CD4-positive, alpha-beta memory T cell (primary cell): ENCODE measurements at regions of chr6 and their contacts with region 1.

Region 1: DNA sequence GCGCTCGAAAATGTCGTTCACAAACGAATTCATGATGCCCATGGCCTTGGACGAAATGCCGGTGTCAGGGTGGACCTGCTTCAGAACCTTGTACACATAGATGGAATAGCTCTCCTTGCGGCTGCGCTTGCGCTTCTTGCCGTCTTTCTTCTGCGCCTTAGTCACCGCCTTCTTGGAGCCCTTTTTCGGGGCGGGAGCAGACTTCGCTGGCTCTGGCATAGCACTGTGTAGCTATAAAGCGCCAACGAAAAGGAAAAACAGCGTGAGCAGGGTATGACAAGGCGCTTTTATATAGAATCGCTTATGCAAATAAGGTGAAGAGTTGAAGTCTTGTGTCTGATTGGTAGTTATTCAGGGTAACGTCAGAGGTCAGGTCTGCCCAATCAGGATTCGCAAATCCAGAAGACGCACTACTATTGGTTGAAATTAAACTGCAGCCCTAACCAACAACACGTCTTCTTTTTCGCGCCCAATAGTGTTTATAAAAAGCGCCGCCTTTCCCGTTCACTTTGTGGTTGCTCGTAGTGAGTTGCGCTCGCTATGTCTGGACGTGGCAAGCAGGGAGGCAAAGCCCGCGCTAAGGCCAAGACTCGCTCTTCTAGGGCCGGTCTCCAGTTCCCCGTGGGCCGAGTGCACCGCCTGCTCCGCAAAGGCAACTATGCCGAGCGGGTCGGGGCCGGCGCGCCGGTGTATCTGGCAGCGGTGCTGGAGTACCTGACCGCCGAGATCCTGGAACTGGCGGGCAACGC is 114.8 kb upstream of the PRSS16 start:
- DNase-seq: peak; percentile 96 to 99 (median 98)
- H3K4me3 ChIP-seq: peak overlapping the region; percentile 72 to 90
- H3K4me3 Mint-ChIP-seq: no peak overlapping the region
- H3K27ac ChIP-seq: peak overlapping the region; percentile 93
- H3K27ac Mint-ChIP-seq: no peak overlapping the region
- H3K4me1 ChIP-seq: peaks cover 27% of the 10 kb centered on the region
- H3K4me1 Mint-ChIP-seq: peaks cover 0 to 24% (median 10%) of the 10 kb centered on the region in 4 donors
- H3K27me3 ChIP-seq: no peaks in the 10 kb centered on the region
- H3K27me3 Mint-ChIP-seq: no peaks in the 10 kb centered on the region

Region 2: DNA sequence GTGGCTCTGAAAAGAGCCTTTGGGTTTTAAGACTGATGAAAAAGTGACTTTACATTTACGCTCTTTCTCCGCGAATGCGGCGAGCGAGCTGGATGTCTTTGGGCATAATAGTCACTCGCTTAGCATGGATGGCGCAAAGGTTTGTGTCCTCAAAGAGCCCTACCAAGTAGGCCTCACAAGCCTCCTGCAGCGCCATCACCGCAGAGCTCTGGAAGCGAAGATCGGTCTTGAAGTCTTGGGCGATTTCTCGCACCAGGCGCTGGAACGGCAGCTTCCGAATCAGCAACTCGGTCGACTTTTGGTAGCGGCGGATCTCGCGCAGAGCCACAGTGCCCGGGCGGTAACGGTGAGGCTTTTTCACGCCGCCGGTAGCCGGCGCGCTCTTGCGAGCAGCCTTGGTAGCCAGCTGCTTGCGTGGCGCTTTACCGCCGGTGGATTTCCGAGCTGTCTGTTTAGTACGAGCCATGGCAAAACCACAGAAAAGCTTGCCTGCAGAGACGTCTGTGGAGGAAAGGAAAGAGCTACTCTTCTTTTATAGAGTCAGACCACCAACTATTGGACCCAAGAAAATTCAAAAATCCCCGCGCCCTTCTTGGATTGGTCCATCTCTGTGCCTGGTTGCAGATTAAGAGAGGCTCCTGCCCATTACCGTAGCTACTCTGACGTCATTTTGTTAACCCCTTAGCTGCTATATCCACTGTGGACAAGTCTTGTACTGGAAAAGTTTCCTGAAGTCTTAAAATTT is 1100.9 kb before region 1 on chr6:
- CTCF ChIA-PET with region 1: no interaction called
- POLR2A ChIA-PET with region 1: interaction called, 38 read pairs
- intact Hi-C with region 1: loop called (anchors 2 kb)
- DNase-seq: peak; percentile 86 to 94 (median 89)
- H3K4me3 ChIP-seq: peak overlapping the region; percentile 53 to 67
- H3K4me3 Mint-ChIP-seq: peak overlapping the region; percentile 91 to 99 (median 94)
- H3K27ac ChIP-seq: peak overlapping the region; percentile 71
- H3K27ac Mint-ChIP-seq: peak overlapping the region; percentile 89 to 98 (median 96)
- H3K4me1 ChIP-seq: peaks cover 35% of the 10 kb centered on the region
- H3K4me1 Mint-ChIP-seq: peaks cover 33 to 54% (median 44%) of the 10 kb centered on the region in 4 donors
- H3K27me3 ChIP-seq: no peaks in the 10 kb centered on the region
- H3K27me3 Mint-ChIP-seq: peaks cover 0 to 3% of the 10 kb centered on the region in 2 donors

Region 3: GRCh38 chr6:26204332-26205165 is 928.2 kb before region 1 on chr6:
- CTCF ChIA-PET with region 1: no interaction called
- POLR2A ChIA-PET with region 1: interaction called, 72 read pairs
- intact Hi-C with region 1: loop called (anchors 2 kb)
- DNase-seq: peak; percentile 85 to 95 (median 89)
- H3K4me3 ChIP-seq: peak overlapping the region; percentile 48 to 87
- H3K4me3 Mint-ChIP-seq: no peak overlapping the region
- H3K27ac ChIP-seq: peak overlapping the region; percentile 82
- H3K27ac Mint-ChIP-seq: no peak overlapping the region
- H3K4me1 ChIP-seq: peaks cover 39% of the 10 kb centered on the region
- H3K4me1 Mint-ChIP-seq: peaks cover 8 to 26% (median 13%) of the 10 kb centered on the region in 4 donors
- H3K27me3 ChIP-seq: no peaks in the 10 kb centered on the region
- H3K27me3 Mint-ChIP-seq: peaks cover 0 to 3% of the 10 kb centered on the region in 2 donors

Region 4: GRCh38 chr6:27002447-27002846 is 130.3 kb before region 1 on chr6:
- CTCF ChIA-PET with region 1: no interaction called
- POLR2A ChIA-PET with region 1: no interaction called
- intact Hi-C with region 1: no loop called
- DNase-seq: no peak
- H3K4me3 ChIP-seq: no peak overlapping the region
- H3K4me3 Mint-ChIP-seq: no peak overlapping the region
- H3K27ac ChIP-seq: no peak overlapping the region
- H3K27ac Mint-ChIP-seq: no peak overlapping the region
- H3K4me1 ChIP-seq: no peaks in the 10 kb centered on the region
- H3K4me1 Mint-ChIP-seq: no peaks in the 10 kb centered on the region
- H3K27me3 ChIP-seq: peaks cover 3% of the 10 kb centered on the region
- H3K27me3 Mint-ChIP-seq: peaks cover 6 to 8% of the 10 kb centered on the region in 2 donors

Region 5: GRCh38 chr6:27091661-27092646 is 40.8 kb before region 1 on chr6:
- CTCF ChIA-PET with region 1: no interaction called
- POLR2A ChIA-PET with region 1: no interaction called
- intact Hi-C with region 1: no loop called
- DNase-seq: no peak
- H3K4me3 ChIP-seq: no peak overlapping the region
- H3K4me3 Mint-ChIP-seq: peak overlapping the region in 7 of 8 donors; percentile 6 to 75 (median 57)
- H3K27ac ChIP-seq: no peak overlapping the region
- H3K27ac Mint-ChIP-seq: no peak overlapping the region
- H3K4me1 ChIP-seq: peaks cover 14% of the 10 kb centered on the region
- H3K4me1 Mint-ChIP-seq: peaks cover 7 to 16% (median 12%) of the 10 kb centered on the region in 4 donors
- H3K27me3 ChIP-seq: peaks cover 40% of the 10 kb centered on the region
- H3K27me3 Mint-ChIP-seq: peaks cover 48 to 55% of the 10 kb centered on the region in 2 donors

Region 6: DNA sequence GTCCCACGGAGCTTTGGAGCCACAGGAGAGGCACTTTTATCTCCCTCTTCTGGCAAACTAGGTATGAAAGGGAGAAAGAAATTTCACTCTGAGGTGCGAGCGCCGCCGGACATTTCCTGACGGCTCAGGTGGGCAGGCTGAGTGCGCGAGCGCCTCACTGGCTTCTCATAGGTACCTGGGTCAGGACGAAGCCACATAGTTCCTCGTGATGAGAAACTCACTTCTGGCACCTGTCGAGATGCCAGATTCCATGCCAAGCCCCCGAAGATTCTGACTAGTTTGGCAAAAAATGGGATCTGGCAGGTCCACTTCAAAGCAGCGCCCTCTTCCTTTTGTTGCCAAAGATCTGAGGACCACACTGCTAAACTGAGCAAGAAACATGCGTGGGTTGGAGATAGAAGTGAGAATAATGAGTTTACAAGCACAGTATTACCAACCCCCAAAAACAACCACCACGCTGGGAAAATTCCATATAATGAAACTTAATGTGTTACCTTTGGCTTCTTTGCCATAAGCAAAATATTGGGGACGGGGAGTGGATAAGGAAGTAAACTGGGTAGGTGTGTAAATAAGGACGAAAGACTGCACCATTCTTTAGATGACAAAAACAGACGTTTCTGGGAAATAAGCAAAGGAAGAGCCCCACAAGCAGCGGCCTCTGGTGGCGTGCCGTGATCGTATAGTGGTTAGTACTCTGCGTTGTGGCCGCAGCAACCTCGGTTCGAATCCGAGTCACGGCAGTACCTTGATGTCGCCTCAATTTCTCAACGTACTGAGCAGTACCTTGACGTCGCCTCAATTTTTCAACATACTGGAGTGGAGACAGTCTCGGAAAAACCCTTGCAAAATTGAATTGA is 25.0 kb after region 1 on chr6:
- CTCF ChIA-PET with region 1: interaction called, 46 read pairs
- POLR2A ChIA-PET with region 1: interaction called, 863 read pairs
- intact Hi-C with region 1: loop called (anchors 1 kb)
- DNase-seq: peak; percentile 78 to 92 (median 82)
- H3K4me3 ChIP-seq: peak overlapping the region; percentile 18 to 44
- H3K4me3 Mint-ChIP-seq: peak overlapping the region; percentile 81 to 91 (median 84)
- H3K27ac ChIP-seq: no peak overlapping the region
- H3K27ac Mint-ChIP-seq: peak overlapping the region; percentile 68 to 95 (median 85)
- H3K4me1 ChIP-seq: peaks cover 30% of the 10 kb centered on the region
- H3K4me1 Mint-ChIP-seq: peaks cover 21 to 46% (median 38%) of the 10 kb centered on the region in 4 donors
- H3K27me3 ChIP-seq: no peaks in the 10 kb centered on the region
- H3K27me3 Mint-ChIP-seq: peaks cover 0 to 4% of the 10 kb centered on the region in 2 donors

Region 7: DNA sequence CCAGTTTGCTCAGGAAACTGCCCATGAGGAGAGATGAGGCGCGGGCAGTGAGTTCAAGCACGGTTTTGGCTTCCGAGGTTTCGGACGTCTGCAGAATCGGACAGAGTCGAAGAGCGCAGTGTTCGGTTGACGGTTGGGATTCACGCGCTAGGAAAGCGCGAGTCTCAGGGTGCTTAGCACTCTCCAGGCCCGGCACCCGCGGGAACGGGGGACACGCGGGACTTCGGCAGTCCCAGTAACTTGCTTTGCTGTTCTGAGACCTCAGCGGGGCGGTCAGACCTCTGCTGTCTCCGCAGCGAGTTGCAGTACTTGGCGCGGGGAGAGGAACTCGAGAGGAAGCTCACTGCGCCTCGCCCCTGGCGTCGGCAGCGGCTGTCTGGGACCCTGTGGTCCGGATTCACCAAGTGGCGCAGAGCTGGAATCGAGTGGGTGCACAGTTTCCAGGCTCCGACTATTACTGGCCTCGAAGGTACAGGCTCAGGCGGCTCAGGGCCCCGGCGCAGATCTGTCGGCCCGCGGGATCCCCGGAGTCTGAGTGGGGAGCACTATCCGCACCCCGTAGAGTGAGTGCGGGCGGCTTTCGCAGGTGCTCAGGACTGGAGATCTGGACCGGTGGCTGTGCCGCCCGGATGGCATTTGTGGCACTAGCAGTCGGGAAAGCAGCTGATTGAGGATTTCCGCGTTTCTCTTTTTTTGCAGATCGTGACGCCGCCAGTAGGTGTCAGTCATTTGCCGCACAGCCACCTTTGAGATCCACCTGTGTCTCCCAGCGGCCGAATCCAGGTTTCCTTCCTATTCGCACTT is 179.6 kb after region 1 on chr6 and contains the start of gene POM121L2:
- CTCF ChIA-PET with region 1: no interaction called
- POLR2A ChIA-PET with region 1: no interaction called
- intact Hi-C with region 1: no loop called
- DNase-seq: peak; percentile 50 to 68 (median 61)
- H3K4me3 ChIP-seq: peak within 1 kb of the TSS; percentile 44 to 57
- H3K4me3 Mint-ChIP-seq: peak within 1 kb of the TSS; percentile 81 to 86 (median 83)
- H3K27ac ChIP-seq: no peak within 1 kb of the TSS
- H3K27ac Mint-ChIP-seq: peak within 1 kb of the TSS in 3 of 7 donors; percentile 7 to 37 (median 21)
- H3K4me1 ChIP-seq: peaks cover 5% of the 10 kb centered on the region
- H3K4me1 Mint-ChIP-seq: peaks cover 0 to 14% (median 7%) of the 10 kb centered on the region in 4 donors
- H3K27me3 ChIP-seq: peaks cover 26% of the 10 kb centered on the region
- H3K27me3 Mint-ChIP-seq: peaks cover 39 to 55% of the 10 kb centered on the region in 2 donors
- total RNA-seq, gene POM121L2: not detected

Region 8: GRCh38 chr6:27479319-27480182 is 346.8 kb after region 1 on chr6:
- CTCF ChIA-PET with region 1: interaction called, 3 read pairs
- POLR2A ChIA-PET with region 1: interaction called, 18 read pairs
- intact Hi-C with region 1: loop called (anchors 2 kb)
- DNase-seq: peak; percentile 87 to 93 (median 92)
- H3K4me3 ChIP-seq: peak overlapping the region; percentile 88 to 93
- H3K4me3 Mint-ChIP-seq: no peak overlapping the region
- H3K27ac ChIP-seq: peak overlapping the region; percentile 85
- H3K27ac Mint-ChIP-seq: no peak overlapping the region
- H3K4me1 ChIP-seq: peaks cover 17% of the 10 kb centered on the region
- H3K4me1 Mint-ChIP-seq: peaks cover 0 to 11% (median 5%) of the 10 kb centered on the region in 4 donors
- H3K27me3 ChIP-seq: no peaks in the 10 kb centered on the region
- H3K27me3 Mint-ChIP-seq: no peaks in the 10 kb centered on the region

Region 9: DNA sequence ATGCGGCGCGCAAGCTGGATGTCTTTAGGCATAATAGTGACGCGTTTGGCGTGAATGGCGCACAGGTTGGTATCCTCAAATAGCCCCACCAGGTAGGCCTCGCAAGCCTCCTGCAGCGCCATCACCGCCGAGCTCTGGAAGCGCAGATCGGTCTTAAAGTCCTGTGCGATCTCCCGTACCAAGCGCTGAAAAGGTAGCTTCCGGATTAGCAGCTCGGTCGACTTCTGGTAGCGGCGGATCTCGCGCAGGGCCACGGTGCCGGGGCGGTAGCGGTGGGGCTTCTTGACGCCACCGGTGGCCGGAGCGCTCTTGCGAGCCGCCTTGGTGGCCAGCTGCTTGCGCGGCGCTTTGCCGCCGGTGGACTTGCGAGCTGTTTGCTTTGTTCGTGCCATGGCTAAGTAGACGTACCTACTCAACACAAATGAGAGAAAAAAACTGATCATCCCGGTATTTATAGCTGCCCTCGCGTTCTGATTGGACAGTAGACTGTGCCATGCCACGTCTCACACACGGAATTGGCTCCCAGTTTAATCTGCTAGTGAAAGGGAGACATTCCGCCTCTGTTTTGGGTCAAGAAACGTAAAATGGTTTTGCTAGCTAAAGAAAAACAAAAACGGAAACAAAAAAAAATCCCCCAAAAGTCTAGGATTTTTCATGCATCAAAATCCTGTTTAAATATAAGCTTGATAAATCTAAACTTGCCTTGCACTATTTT is 739.4 kb after region 1 on chr6:
- CTCF ChIA-PET with region 1: interaction called, 4 read pairs
- POLR2A ChIA-PET with region 1: interaction called, 62 read pairs
- intact Hi-C with region 1: loop called (anchors 2 kb)
- DNase-seq: peak; percentile 91 to 96 (median 94)
- H3K4me3 ChIP-seq: peak overlapping the region; percentile 77 to 89
- H3K4me3 Mint-ChIP-seq: peak overlapping the region; percentile 87 to 94 (median 90)
- H3K27ac ChIP-seq: peak overlapping the region; percentile 86
- H3K27ac Mint-ChIP-seq: peak overlapping the region; percentile 89 to 97 (median 94)
- H3K4me1 ChIP-seq: peaks cover 33% of the 10 kb centered on the region
- H3K4me1 Mint-ChIP-seq: peaks cover 24 to 48% (median 33%) of the 10 kb centered on the region in 4 donors
- H3K27me3 ChIP-seq: no peaks in the 10 kb centered on the region
- H3K27me3 Mint-ChIP-seq: no peaks in the 10 kb centered on the region